ENCODE measurements at regions of chr15 and their contacts with region 1.

Region 1: GRCh38 chr15:32042269-32042972 is 12.1 kb downstream of the CHRNA7 start:
- H3K4me3 ChIP-seq: no peak overlapping the region
- H3K27ac ChIP-seq: no peak overlapping the region
- H3K4me1 ChIP-seq: peaks cover 4% of the 10 kb centered on the region; the same call in 1 of the 2 replicates
- CTCF ChIP-seq: no peak

Region 2: GRCh38 chr15:32029862-32030781 is 12.3 kb before region 1 on chr15 and contains the start of gene CHRNA7:
- CTCF ChIA-PET with region 1: interaction called, 11 read pairs
- POLR2A ChIA-PET with region 1: no interaction called
- H3K4me3 ChIP-seq: peak within 1 kb of the TSS; percentile 62
- H3K27ac ChIP-seq: peak within 1 kb of the TSS; percentile 64; the same call in 1 of the 2 replicates
- H3K4me1 ChIP-seq: no peaks in the 10 kb centered on the region; the same call in 1 of the 2 replicates
- CTCF ChIP-seq: no peak

Region 3: GRCh38 chr15:32134842-32135241 is 92.4 kb after region 1 on chr15:
- CTCF ChIA-PET with region 1: no interaction called
- POLR2A ChIA-PET with region 1: no interaction called
- H3K4me3 ChIP-seq: no peak overlapping the region
- H3K27ac ChIP-seq: no peak overlapping the region
- H3K4me1 ChIP-seq: no peaks in the 10 kb centered on the region
- CTCF ChIP-seq: no peak